CD14-positive monocyte (primary cell): ENCODE measurements at regions of chr3 and their contacts with region 1.

Region 1: GRCh38 chr3:160413613-160414248 is 14.3 kb downstream of the SMC4 start:
- DNase-seq: peak; percentile 65 to 78 (median 74)
- H3K4me3 ChIP-seq: no peak overlapping the region
- H3K4me3 Mint-ChIP-seq: no peak overlapping the region
- H3K27ac ChIP-seq: no peak overlapping the region
- H3K27ac Mint-ChIP-seq: no peak overlapping the region
- H3K4me1 ChIP-seq: no peaks in the 10 kb centered on the region
- H3K4me1 Mint-ChIP-seq: peaks cover 7% of the 10 kb centered on the region
- H3K27me3 ChIP-seq: no peaks in the 10 kb centered on the region
- H3K27me3 Mint-ChIP-seq: no peaks in the 10 kb centered on the region
- CTCF ChIP-seq: peak; percentile 96

Region 2: GRCh38 chr3:159884661-159885402 is 528.9 kb before region 1 on chr3:
- intact Hi-C with region 1: loop called in 1 of 2 experiments (anchors 5 kb)
- DNase-seq: peak; percentile 20 to 63 (median 40)
- H3K4me3 ChIP-seq: no peak overlapping the region
- H3K4me3 Mint-ChIP-seq: no peak overlapping the region
- H3K27ac ChIP-seq: no peak overlapping the region
- H3K27ac Mint-ChIP-seq: no peak overlapping the region
- H3K4me1 ChIP-seq: peaks cover 9 to 10% of the 10 kb centered on the region in 2 donors
- H3K4me1 Mint-ChIP-seq: peaks cover 20% of the 10 kb centered on the region
- H3K27me3 ChIP-seq: no peaks in the 10 kb centered on the region
- H3K27me3 Mint-ChIP-seq: peaks cover 0 to 1% (median 0%) of the 10 kb centered on the region in 3 donors
- CTCF ChIP-seq: peak; percentile 85

Region 3: GRCh38 chr3:160027541-160028195 is 386.1 kb before region 1 on chr3:
- intact Hi-C with region 1: loop called (anchors 5 kb)
- DNase-seq: peak in 2 of 3 donors; percentile 14 to 28
- H3K4me3 ChIP-seq: peak overlapping the region in 1 of 3 experiments; percentile 31
- H3K4me3 Mint-ChIP-seq: peak overlapping the region in 1 of 2 donors; percentile 79
- H3K27ac ChIP-seq: no peak overlapping the region
- H3K27ac Mint-ChIP-seq: peak overlapping the region in 1 of 7 donors; percentile 51
- H3K4me1 ChIP-seq: peaks cover 9 to 11% of the 10 kb centered on the region in 2 donors
- H3K4me1 Mint-ChIP-seq: peaks cover 14% of the 10 kb centered on the region
- H3K27me3 ChIP-seq: no peaks in the 10 kb centered on the region
- H3K27me3 Mint-ChIP-seq: peaks cover 0 to 5% (median 0%) of the 10 kb centered on the region in 3 donors
- CTCF ChIP-seq: no peak

Region 4: GRCh38 chr3:160225176-160226025 is 188.3 kb before region 1 on chr3 and contains the start of gene C3orf80:
- intact Hi-C with region 1: loop called in 1 of 2 experiments (anchors 10 kb)
- DNase-seq: peak; percentile 25 to 42 (median 33)
- H3K4me3 ChIP-seq: peak within 1 kb of the TSS; percentile 22 to 74 (median 50)
- H3K4me3 Mint-ChIP-seq: peak within 1 kb of the TSS; percentile 84 to 96
- H3K27ac ChIP-seq: no peak within 1 kb of the TSS
- H3K27ac Mint-ChIP-seq: peak within 1 kb of the TSS in 1 of 7 donors; percentile 15
- H3K4me1 ChIP-seq: peaks cover 22 to 31% of the 10 kb centered on the region in 2 donors
- H3K4me1 Mint-ChIP-seq: peaks cover 25% of the 10 kb centered on the region
- H3K27me3 ChIP-seq: peaks cover 30 to 48% of the 10 kb centered on the region in 2 donors
- H3K27me3 Mint-ChIP-seq: peaks cover 32 to 46% (median 34%) of the 10 kb centered on the region in 3 donors
- CTCF ChIP-seq: peak; percentile 27
- polyA plus RNA-seq, gene C3orf80: 0.03 TPM in 1 of 3 donors, not detected in the others

Region 5: GRCh38 chr3:160725338-160725737 is 311.6 kb after region 1 on chr3:
- intact Hi-C with region 1: no loop called
- DNase-seq: no peak
- H3K4me3 ChIP-seq: no peak overlapping the region
- H3K4me3 Mint-ChIP-seq: no peak overlapping the region
- H3K27ac ChIP-seq: no peak overlapping the region
- H3K27ac Mint-ChIP-seq: no peak overlapping the region
- H3K4me1 ChIP-seq: no peaks in the 10 kb centered on the region
- H3K4me1 Mint-ChIP-seq: no peaks in the 10 kb centered on the region
- H3K27me3 ChIP-seq: no peaks in the 10 kb centered on the region
- H3K27me3 Mint-ChIP-seq: peaks cover 2 to 4% (median 3%) of the 10 kb centered on the region in 3 donors
- CTCF ChIP-seq: no peak